ENCODE measurements at regions of chr5 and their contacts with region 1.

Region 1: GRCh38 chr5:85049020-85049419 is 664.3 kb upstream of the EDIL3 start:
- DNase-seq: no peak
- ATAC-seq: peak; percentile 44 to 53

Region 2: DNA sequence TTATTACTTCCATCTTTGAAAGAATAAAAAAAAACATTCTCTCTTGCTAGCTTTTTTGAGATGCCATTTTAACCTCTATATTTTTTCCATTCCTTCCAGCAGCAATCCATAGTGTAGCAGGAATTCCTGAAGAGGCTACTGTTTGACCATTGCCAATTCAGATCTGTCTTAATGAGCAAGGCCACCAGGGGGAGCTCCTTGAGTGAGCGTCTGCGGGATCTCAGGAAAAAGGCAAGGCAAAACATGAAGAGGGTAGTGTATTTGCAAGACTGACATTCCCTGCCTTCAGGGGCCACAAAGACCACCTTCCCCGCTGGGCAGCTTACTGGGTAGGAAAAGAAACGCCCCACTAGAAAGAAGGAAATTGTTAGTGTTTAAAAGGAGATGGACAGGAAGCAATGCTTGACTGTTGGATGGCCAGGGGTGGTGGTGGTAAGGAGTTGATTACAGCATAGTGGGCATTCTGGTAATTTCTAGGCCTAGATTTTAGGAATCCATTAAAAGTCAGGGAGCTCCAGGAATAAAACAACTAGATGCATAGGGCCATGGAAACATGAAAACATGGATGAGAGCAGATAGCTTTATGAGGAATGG is 1121.8 kb before region 1 on chr5:
- intact Hi-C with region 1: loop called in 1 of 2 experiments (anchors 10 kb)
- DNase-seq: peak; percentile 52
- ATAC-seq: peak; percentile 34 to 44

Region 3: DNA sequence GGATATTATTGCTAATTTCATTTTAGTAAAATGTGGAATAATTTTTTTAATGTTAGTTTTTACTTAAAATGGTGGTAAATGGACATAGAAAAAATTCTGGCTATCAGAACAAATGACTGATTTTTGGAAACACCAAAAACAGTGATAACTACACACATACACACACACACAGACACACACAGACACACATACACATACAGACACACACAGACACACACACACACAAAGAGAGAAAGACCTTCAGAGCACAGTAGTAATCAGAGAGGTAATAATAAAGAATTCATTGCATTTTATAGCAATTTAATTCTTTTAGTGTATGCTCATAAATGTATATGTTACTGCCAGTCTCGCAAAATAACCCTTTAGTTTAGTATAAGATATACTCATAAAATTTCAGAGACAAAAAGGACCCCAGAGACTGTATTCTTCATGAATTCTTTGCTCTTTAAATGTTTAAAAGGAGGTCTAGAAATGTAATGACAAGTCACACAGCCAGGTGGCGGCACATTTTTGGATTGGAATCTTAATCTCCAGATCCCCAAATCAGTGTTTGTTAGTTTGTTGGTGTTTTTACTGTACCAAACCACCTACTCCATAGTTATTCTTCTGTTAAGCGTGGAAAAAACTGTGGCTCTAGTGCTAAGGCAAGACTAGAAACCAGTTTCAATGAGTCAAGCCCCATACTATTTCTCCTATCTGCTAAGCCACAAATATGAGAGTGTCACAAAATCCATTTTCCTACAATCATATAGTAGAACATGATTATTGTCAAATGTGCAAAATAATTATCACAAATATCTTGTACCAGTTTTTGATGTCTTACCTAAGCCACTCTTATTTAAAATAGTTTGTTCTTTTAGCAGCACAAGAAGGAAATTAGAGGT is 774.2 kb before region 1 on chr5:
- intact Hi-C with region 1: loop called in 1 of 2 experiments (anchors 5 kb)
- DNase-seq: peak; percentile 20
- ATAC-seq: no peak